ENCODE measurements at regions of chr1 and their contacts with region 1.

Region 1: GRCh38 chr1:25874934-25875855 is at the start of gene PAQR7:
- DNase-seq: peak; percentile 68
- ATAC-seq: peak; percentile 88
- H3K4me3 Mint-ChIP-seq: peak within 1 kb of the TSS; percentile 84
- H3K27ac Mint-ChIP-seq: peak within 1 kb of the TSS; percentile 56
- H3K4me1 Mint-ChIP-seq: peaks cover 35% of the 10 kb centered on the region
- H3K27me3 Mint-ChIP-seq: no peaks in the 10 kb centered on the region
- CTCF ChIP-seq: no peak
- total RNA-seq, gene PAQR7: 3.7 and 4.6 TPM in 2 replicates

Region 2: GRCh38 chr1:24642481-24643361 is 1232.5 kb before region 1 on chr1 and contains the start of gene SRRM1:
- CTCF ChIA-PET with region 1: no interaction called
- POLR2A ChIA-PET with region 1: no interaction called
- intact Hi-C with region 1: loop called (anchors 10 kb)
- DNase-seq: peak; percentile 96
- ATAC-seq: peak; percentile 90
- H3K4me3 Mint-ChIP-seq: peak within 1 kb of the TSS; percentile 96
- H3K27ac Mint-ChIP-seq: peak within 1 kb of the TSS; percentile 99
- H3K4me1 Mint-ChIP-seq: peaks cover 38% of the 10 kb centered on the region
- H3K27me3 Mint-ChIP-seq: no peaks in the 10 kb centered on the region
- CTCF ChIP-seq: no peak
- total RNA-seq, gene SRRM1: 214 and 220 TPM in 2 replicates

Region 3: DNA sequence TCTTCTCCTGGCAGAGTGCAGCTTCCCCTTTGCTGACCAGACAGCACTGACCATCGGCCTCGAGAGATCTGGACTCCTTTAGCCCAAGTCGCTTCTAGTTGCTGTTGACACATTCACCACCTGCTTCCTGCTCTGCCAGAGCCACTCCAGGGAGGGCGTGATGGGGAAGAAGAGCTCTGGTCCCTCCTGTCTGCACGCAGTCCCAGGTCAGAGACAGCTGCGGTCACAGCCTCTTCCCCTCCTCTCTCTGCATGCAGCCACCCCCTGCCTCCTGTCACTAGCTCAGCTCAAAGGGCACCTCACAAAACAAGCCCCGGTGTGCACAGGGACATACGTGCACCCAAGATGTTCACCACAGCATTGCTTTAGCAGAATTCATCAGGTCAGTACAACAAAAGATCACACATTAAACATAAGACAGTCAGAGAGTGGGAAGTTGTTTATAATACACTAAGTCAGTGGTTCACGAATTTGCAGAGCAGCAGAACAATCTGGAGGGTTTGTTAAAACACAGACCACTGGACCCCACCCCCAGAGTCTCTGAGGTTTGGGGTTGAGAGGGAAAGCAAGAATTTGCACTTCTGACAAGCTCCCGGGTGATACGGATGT is 775.7 kb before region 1 on chr1:
- CTCF ChIA-PET with region 1: no interaction called
- POLR2A ChIA-PET with region 1: no interaction called
- intact Hi-C with region 1: no loop called
- DNase-seq: no peak
- ATAC-seq: peak; percentile 18
- H3K4me3 Mint-ChIP-seq: no peak overlapping the region
- H3K27ac Mint-ChIP-seq: no peak overlapping the region
- H3K4me1 Mint-ChIP-seq: peaks cover 40% of the 10 kb centered on the region
- H3K27me3 Mint-ChIP-seq: no peaks in the 10 kb centered on the region
- CTCF ChIP-seq: no peak

Region 4: DNA sequence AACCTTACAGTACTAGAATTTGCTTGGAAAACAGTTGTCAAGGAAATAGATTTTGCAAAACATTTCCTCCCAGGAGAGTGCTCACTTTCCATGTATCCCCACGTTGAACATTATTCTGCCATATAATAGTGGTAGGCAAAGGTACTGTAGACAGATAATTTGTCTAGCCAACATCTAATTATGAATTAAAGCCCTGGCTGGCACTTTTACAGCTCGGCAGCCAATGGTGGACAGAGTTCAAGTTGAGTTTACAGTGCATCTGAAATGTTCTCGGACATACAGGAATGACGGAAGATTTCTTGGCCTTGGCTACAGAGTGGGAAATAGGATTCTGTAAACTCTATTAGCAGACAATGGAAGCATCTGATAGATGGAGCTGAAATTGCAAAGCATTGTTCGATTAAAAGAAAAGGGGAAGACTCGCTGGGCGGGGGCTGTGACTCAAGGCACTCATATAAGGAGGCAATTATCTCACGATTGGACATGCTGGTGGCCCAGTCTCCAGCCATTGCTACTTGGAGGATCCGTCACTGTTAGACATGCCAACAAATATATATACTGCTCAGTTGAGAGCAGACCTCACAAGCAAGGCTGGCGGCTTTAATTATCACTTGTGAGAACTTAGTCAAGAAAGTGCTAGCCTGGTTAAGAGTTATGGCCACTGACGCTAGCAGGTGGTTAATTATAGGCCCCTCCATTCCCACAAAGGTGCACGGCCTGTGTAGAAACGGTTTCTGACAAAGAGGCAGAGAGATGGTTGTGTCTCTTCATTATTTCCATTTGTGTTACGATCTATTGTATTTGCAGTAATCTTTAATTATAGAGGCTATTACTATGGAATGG is 210.6 kb before region 1 on chr1:
- CTCF ChIA-PET with region 1: no interaction called
- POLR2A ChIA-PET with region 1: no interaction called
- intact Hi-C with region 1: no loop called
- DNase-seq: no peak
- ATAC-seq: no peak
- H3K4me3 Mint-ChIP-seq: no peak overlapping the region
- H3K27ac Mint-ChIP-seq: no peak overlapping the region
- H3K4me1 Mint-ChIP-seq: no peaks in the 10 kb centered on the region
- H3K27me3 Mint-ChIP-seq: peaks cover 11% of the 10 kb centered on the region
- CTCF ChIP-seq: no peak

Region 5: DNA sequence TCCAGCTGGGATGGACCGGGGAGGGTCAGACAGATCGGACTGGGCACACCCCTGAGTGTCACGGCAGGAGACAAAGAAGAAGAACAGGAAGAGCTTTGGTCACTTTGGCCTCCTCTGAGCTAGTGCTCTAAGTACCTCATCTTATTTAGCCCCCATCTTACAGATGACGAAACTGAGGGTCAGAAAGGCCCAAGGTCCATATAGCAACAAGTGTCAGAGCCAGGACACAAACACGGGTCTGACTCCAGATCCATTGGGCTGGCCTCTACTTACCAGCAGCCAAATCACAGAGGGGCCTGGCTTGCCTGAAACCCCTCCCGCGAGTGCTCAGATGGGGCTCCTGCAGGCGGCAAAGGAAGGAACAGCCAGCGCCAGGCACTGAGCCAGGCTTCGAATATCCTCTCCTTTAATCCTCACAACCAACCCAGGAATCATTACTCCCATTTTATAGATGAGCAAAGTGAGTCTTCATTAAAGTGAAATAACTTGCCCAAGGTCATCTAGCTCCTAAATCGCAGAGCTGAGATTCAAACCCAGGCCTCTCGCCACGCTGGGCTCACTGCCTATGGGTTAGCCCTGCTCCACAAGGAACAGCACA is 100.9 kb before region 1 on chr1:
- CTCF ChIA-PET with region 1: no interaction called
- POLR2A ChIA-PET with region 1: interaction called, 12 read pairs
- intact Hi-C with region 1: no loop called
- DNase-seq: no peak
- ATAC-seq: no peak
- H3K4me3 Mint-ChIP-seq: no peak overlapping the region
- H3K27ac Mint-ChIP-seq: no peak overlapping the region
- H3K4me1 Mint-ChIP-seq: peaks cover 45% of the 10 kb centered on the region
- H3K27me3 Mint-ChIP-seq: peaks cover 25% of the 10 kb centered on the region
- CTCF ChIP-seq: no peak

Region 6: DNA sequence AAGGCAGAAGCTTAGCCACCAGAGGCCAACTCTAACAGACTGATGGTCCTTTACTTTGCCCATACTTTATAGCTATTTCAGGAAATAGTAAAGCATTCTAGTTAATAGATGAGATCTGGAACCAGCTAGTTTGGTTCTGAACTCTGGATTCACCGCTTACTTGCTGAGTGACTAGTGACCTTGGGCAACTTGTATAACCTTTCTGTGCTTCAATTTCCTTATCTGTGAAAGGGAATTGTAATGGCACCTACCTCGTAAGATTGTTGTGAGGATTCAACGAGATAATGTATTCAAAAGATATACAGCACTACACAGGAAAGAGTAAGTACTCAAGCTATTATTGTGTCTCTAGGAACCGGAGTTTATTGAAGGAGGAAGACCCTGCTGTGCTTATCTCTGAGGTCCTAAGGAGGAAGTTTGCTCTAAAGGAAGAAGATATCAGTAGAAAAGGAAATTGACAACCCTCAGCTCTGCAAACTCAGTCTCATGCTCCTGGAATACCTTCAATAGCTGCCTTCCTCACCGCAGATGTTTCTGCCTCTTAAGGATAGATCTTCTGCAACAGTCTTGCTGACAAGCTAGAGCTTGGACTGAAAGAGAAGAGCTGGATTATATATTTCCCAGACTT is 43.5 kb before region 1 on chr1:
- CTCF ChIA-PET with region 1: no interaction called
- POLR2A ChIA-PET with region 1: no interaction called
- intact Hi-C with region 1: no loop called
- DNase-seq: no peak
- ATAC-seq: no peak
- H3K4me3 Mint-ChIP-seq: no peak overlapping the region
- H3K27ac Mint-ChIP-seq: no peak overlapping the region
- H3K4me1 Mint-ChIP-seq: no peaks in the 10 kb centered on the region
- H3K27me3 Mint-ChIP-seq: no peaks in the 10 kb centered on the region
- CTCF ChIP-seq: no peak

Region 7: DNA sequence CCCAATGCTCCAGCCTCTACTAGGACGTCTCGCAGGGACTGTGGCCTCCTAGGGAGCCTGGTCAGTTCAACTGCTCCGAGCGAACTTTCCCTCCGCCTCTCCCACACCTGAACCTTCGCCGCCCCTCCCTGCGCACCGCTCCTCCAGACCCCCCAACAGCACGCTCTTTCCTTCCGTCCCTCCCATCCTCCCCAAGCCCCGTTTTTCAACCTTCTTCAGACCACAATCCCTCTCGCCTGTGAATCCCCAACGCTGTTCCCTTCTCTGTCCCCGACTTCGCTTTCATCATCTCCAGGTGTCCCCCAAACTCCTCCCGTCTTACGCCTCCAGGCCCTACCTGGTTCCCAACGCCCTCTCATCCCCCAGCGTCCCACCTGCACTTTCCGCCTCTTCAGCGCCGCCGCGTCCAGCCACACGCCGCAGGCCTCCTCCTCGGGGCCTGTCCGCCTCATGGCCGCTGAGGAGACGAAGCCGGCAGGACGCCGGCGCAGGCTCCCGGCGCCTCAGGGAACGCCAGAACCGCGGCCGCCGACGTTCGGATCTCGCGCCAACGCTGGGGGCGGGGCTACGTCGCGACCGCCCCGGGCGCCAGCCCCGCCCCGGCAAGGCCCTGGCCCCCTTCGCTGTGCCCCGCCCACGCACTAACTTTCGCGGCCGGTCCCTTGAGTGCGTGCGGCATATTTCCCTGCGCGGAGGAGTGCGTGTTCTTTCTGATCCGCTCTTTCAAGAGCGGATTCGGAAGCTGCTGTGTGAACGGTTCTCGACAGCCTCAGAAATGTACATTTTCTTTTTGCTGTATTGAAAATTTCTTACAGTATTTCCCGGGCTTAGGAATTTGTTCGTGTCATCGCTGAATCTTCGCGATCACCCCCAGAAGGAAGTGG is 16.0 kb before region 1 on chr1 and contains the start of gene AUNIP:
- CTCF ChIA-PET with region 1: no interaction called
- POLR2A ChIA-PET with region 1: interaction called, 3 read pairs
- intact Hi-C with region 1: loop called (anchors 1 kb)
- DNase-seq: peak; percentile 90
- ATAC-seq: peak; percentile 99
- H3K4me3 Mint-ChIP-seq: peak within 1 kb of the TSS; percentile 91
- H3K27ac Mint-ChIP-seq: peak within 1 kb of the TSS; percentile 94
- H3K4me1 Mint-ChIP-seq: peaks cover 28% of the 10 kb centered on the region
- H3K27me3 Mint-ChIP-seq: no peaks in the 10 kb centered on the region
- CTCF ChIP-seq: no peak
- total RNA-seq, gene AUNIP: 0.42 and 0.64 TPM in 2 replicates

Region 8: DNA sequence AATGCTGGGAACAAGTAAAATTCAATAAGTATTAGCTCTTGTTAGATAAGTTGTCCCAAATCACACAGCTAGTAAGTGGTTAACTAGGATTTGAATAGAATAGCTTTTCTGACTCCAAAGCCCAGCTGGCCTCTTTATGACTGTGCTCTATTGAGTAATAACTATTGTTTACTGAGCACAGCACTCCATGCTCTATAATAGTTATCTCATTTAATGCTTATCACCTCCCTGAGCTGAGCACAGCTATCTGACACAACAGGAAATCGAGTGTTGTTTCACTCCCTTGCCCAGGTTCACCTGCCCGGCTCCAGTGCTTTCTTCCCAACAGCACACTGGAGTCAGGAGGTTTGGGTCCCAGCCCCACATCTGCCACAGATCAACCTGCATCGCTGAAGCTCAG is 69.8 kb after region 1 on chr1:
- CTCF ChIA-PET with region 1: no interaction called
- POLR2A ChIA-PET with region 1: no interaction called
- intact Hi-C with region 1: no loop called
- DNase-seq: no peak
- ATAC-seq: no peak
- H3K4me3 Mint-ChIP-seq: no peak overlapping the region
- H3K27ac Mint-ChIP-seq: no peak overlapping the region
- H3K4me1 Mint-ChIP-seq: no peaks in the 10 kb centered on the region
- H3K27me3 Mint-ChIP-seq: peaks cover 1% of the 10 kb centered on the region
- CTCF ChIP-seq: no peak

Region 9: GRCh38 chr1:26233903-26234643 is 358.9 kb after region 1 on chr1 and contains the start of gene CEP85:
- CTCF ChIA-PET with region 1: no interaction called
- POLR2A ChIA-PET with region 1: no interaction called
- intact Hi-C with region 1: loop called (anchors 10 kb)
- DNase-seq: peak; percentile 94
- ATAC-seq: peak; percentile 88
- H3K4me3 Mint-ChIP-seq: peak within 1 kb of the TSS; percentile 98
- H3K27ac Mint-ChIP-seq: peak within 1 kb of the TSS; percentile 94
- H3K4me1 Mint-ChIP-seq: peaks cover 34% of the 10 kb centered on the region
- H3K27me3 Mint-ChIP-seq: no peaks in the 10 kb centered on the region
- CTCF ChIP-seq: no peak
- total RNA-seq, gene CEP85: 13.8 and 16.4 TPM in 2 replicates

Measured in activated B cell treated with CpG ODN at 0.5 μM for 24 hours (primary cell).